HAP-1 (cell line): ENCODE measurements at regions of chr1 and their contacts with region 1.

Region 1: GRCh38 chr1:241895013-241895412 is 47.0 kb downstream of the EXO1 start:
- DNase-seq: no peak
- H3K4me3 ChIP-seq: no peak overlapping the region
- H3K4me1 ChIP-seq: no peaks in the 10 kb centered on the region
- H3K27me3 ChIP-seq: no peaks in the 10 kb centered on the region

Region 2: GRCh38 chr1:241706954-241707365 is 188.1 kb before region 1 on chr1:
- in situ Hi-C with region 1: no loop called
- DNase-seq: no peak
- H3K4me3 ChIP-seq: no peak overlapping the region
- H3K4me1 ChIP-seq: no peaks in the 10 kb centered on the region
- H3K27me3 ChIP-seq: no peaks in the 10 kb centered on the region

Region 3: DNA sequence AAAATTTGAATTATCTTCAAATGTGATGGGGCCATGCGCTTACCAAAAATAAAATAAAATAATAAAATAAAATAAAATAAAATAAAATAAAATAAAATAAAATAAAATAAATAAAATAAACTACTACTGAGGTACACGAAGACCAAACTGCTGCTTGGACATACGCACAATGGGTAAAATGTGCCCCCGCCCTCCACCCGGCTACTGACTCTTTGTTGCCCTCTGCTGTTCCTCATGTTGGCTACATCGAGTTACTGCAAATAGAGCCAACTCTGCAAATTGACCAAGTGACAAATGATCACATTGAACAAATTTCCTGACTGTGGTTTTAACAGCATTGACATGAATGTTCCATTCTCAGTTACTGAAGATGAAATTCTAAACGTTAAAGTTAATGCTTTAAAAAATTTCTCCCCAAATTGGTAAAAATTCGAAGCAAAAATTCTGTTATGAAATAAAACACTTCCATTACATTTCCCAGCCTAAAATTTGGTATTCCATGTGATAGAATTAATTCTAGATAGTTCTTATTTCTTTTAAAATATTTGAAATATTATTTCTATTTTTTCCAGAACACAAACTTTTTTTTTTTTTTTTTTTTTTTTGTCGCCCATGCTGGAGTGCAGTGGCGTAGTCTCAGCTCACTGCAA is 122.7 kb after region 1 on chr1:
- in situ Hi-C with region 1: loop called (anchors 5 kb)
- DNase-seq: peak; percentile 77 to 81
- H3K4me3 ChIP-seq: no peak overlapping the region
- H3K4me1 ChIP-seq: peaks cover 9% of the 10 kb centered on the region
- H3K27me3 ChIP-seq: no peaks in the 10 kb centered on the region